Activated CD4-positive, alpha-beta T cell treated with anti-CD3 and anti-CD28 coated beads, Interleukin-2, amount 10 ng/mL, durations not matched to agents 7 days and 5 days (primary cell): ENCODE measurements at regions of chr1 and their contacts with region 1.

Region 1: GRCh38 chr1:77794550-77794949 is 15.1 kb downstream of the MIGA1 start:
- DNase-seq: no peak
- H3K4me3 Mint-ChIP-seq: no peak overlapping the region
- H3K27ac Mint-ChIP-seq: no peak overlapping the region
- H3K4me1 Mint-ChIP-seq: peaks cover 2% of the 10 kb centered on the region
- H3K27me3 Mint-ChIP-seq: no peaks in the 10 kb centered on the region

Region 2: GRCh38 chr1:77683160-77684148 is 111.1 kb before region 1 on chr1:
- CTCF ChIA-PET with region 1: no interaction called
- POLR2A ChIA-PET with region 1: no interaction called
- DNase-seq: peak; percentile 92
- H3K4me3 Mint-ChIP-seq: peak overlapping the region; percentile 95
- H3K27ac Mint-ChIP-seq: peak overlapping the region; percentile 95
- H3K4me1 Mint-ChIP-seq: peaks cover 33% of the 10 kb centered on the region
- H3K27me3 Mint-ChIP-seq: no peaks in the 10 kb centered on the region

Region 3: DNA sequence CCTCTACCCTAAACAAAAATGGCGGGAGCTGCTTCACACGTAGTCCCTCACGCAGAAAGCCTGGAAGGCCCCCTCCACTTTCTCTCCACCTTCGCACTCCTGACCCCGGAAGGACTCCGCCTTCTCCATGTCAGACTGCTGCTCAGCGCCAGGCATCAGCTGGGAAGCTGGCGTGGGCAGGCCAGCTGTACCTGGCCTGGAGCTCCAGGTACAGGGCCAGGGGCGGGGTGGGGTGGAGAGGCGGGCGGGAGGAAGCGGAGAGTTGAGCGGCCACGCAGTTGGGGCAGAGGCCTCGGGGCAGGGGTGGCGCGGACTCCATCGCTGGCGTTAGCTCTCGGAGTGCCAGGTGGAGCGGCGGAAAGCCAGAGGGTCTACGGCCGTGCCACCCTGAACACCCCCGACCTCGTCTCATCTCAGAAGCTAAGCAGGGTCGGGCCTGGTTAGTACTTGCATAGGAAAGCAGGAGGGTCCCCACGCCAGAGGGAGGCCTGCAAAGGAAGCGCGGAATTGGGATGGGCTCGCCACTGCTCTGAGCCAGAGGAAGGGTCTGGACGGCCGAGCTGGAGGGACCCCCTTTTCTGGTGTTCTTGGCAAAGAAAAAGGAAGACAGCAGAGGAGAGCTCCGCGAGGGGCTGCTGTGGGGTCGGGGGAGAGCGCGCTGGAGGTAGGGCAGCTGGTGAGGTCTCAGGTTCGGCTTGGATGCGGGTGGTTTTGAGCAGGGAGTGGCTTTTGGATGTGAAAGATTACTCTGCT is 14.8 kb before region 1 on chr1 and contains the start of gene MIGA1:
- CTCF ChIA-PET with region 1: interaction called, 3 read pairs
- POLR2A ChIA-PET with region 1: interaction called, 10 read pairs
- DNase-seq: peak; percentile 93
- H3K4me3 Mint-ChIP-seq: peak within 1 kb of the TSS; percentile 97
- H3K27ac Mint-ChIP-seq: peak within 1 kb of the TSS; percentile 90
- H3K4me1 Mint-ChIP-seq: peaks cover 42% of the 10 kb centered on the region
- H3K27me3 Mint-ChIP-seq: no peaks in the 10 kb centered on the region
- total RNA-seq, gene MIGA1: 10.5 to 10.8 TPM